Thyroid gland (tissue), 4 donors: ENCODE measurements at regions of chrX and their contacts with region 1.

Region 1: GRCh38 chrX:31658360-31658759 is 586.5 kb upstream of the FTHL17 start:
- DNase-seq: no peak
- H3K4me3 ChIP-seq: no peak overlapping the region
- H3K27ac ChIP-seq: no peak overlapping the region
- H3K4me1 ChIP-seq: no peaks in the 10 kb centered on the region
- H3K27me3 ChIP-seq: no peaks in the 10 kb centered on the region
- CTCF ChIP-seq: peak in 4 of 6 experiments; percentile 5 to 65 (median 47)
- POLR2A ChIP-seq: no peak

Region 2: DNA sequence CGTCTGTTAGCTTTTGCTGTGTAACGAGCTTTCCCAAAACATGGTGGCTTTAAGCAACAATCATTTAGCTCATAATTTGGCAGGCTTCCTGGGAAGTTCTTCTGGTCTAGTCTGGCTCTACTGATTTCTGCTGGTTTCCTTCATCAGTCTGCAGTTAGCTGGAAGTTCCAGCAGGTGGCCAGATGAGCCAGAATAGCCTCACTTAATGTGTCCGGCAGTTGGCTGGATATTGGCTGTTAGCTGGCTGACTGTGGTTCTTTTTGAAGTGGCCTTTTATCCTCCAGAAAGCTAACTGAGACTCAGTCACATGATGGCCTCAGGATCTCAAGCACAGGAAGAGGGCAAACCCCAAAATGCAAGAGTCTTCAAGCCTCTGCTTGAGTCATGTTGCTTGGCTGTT is 621.5 kb before region 1 on chrX:
- intact Hi-C with region 1: loop called (anchors 10 kb)
- DNase-seq: peak; percentile 48 to 53
- H3K4me3 ChIP-seq: no peak overlapping the region
- H3K27ac ChIP-seq: no peak overlapping the region
- H3K4me1 ChIP-seq: no peaks in the 10 kb centered on the region
- H3K27me3 ChIP-seq: no peaks in the 10 kb centered on the region
- CTCF ChIP-seq: peak in 5 of 6 experiments; percentile 28 to 57 (median 50)
- POLR2A ChIP-seq: no peak

Region 3: DNA sequence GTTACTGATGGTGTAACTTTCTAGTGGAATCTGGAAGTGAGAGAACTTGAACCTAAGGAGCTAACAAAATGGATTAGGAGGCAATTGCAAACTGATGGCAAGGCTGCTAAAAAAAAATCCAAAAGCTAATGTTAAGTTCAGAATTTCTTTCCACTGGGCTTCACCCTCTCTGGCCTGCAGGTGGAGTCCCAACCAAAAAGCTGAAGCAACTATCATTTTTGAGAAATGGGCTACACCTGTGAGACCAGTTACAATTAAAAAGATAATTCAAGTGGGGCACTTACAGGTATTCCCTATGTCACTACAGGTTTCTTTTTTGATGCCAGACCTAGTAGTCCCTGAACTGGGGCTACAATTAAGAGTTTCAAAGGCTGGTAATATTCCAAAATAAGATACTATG is 444.4 kb before region 1 on chrX:
- intact Hi-C with region 1: loop called (anchors 10 kb)
- DNase-seq: peak in 1 of 2 donors; percentile 39
- H3K4me3 ChIP-seq: no peak overlapping the region
- H3K27ac ChIP-seq: no peak overlapping the region
- H3K4me1 ChIP-seq: no peaks in the 10 kb centered on the region
- H3K27me3 ChIP-seq: no peaks in the 10 kb centered on the region
- CTCF ChIP-seq: peak in 4 of 6 experiments; percentile 20 to 48 (median 25)
- POLR2A ChIP-seq: no peak